ENCODE measurements at regions of chr15 and their contacts with region 1.

Region 1: GRCh38 chr15:63905558-63906265 is 72.0 kb upstream of the HERC1 start:
- DNase-seq: no peak
- H3K4me3 ChIP-seq: no peak overlapping the region
- CTCF ChIP-seq: no peak

Region 2: GRCh38 chr15:63891079-63891767 is 14.5 kb before region 1 on chr15:
- CTCF ChIA-PET with region 1: interaction called, 12 read pairs
- POLR2A ChIA-PET with region 1: no interaction called
- DNase-seq: no peak
- H3K4me3 ChIP-seq: no peak overlapping the region
- CTCF ChIP-seq: peak; percentile 91